PC-3 (cell line): ENCODE measurements at regions of chr5 and their contacts with region 1.

Region 1: GRCh38 chr5:24642022-24642421 is 2.8 kb downstream of the CDH10 start:
- DNase-seq: peak; percentile 75
- ATAC-seq: peak; percentile 62
- H3K4me3 ChIP-seq: no peak overlapping the region
- H3K27ac ChIP-seq: no peak overlapping the region
- H3K4me1 ChIP-seq: no peaks in the 10 kb centered on the region; the same call in 1 of the 2 replicates
- H3K27me3 ChIP-seq: no peaks in the 10 kb centered on the region
- CTCF ChIP-seq: peak; percentile 80

Region 2: DNA sequence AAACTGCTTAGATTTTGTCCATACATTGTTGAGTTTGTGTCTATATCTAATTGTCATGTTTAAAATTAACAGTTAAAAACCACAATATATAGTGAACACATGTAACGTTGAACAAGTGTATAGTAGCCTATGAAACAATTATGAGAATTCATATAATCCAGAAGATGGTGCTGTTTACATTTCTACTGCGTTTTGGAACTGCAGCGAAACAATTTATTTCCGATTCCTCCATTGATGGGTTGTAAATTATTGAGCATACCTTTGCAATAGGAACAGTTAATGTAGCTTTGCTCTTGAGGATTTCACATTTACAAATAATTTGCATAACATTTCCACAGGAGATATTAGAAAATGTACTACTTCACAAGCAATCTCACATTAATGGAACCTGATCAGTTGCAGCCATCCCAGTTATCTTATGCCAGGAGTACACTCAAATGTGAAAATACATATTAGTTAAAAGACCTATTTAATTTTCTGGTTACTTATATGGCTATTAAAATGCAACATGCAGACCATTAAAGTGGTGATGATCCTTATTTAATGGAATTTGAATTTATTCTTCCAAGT is 409.0 kb before region 1 on chr5:
- CTCF ChIA-PET with region 1: no interaction called
- POLR2A ChIA-PET with region 1: no interaction called
- intact Hi-C with region 1: loop called (anchors 1 kb)
- DNase-seq: peak; percentile 39
- ATAC-seq: no peak; the same call in 1 of the 2 replicates
- H3K4me3 ChIP-seq: no peak overlapping the region
- H3K27ac ChIP-seq: no peak overlapping the region
- H3K4me1 ChIP-seq: no peaks in the 10 kb centered on the region
- H3K27me3 ChIP-seq: no peaks in the 10 kb centered on the region
- CTCF ChIP-seq: peak; percentile 72

Region 3: GRCh38 chr5:24245821-24246220 is 396.2 kb before region 1 on chr5:
- CTCF ChIA-PET with region 1: no interaction called
- POLR2A ChIA-PET with region 1: no interaction called
- intact Hi-C with region 1: loop called (anchors 5 kb)
- DNase-seq: peak; percentile 53
- ATAC-seq: peak; percentile 87
- H3K4me3 ChIP-seq: no peak overlapping the region
- H3K27ac ChIP-seq: no peak overlapping the region
- H3K4me1 ChIP-seq: peaks cover 19% of the 10 kb centered on the region
- H3K27me3 ChIP-seq: no peaks in the 10 kb centered on the region
- CTCF ChIP-seq: no peak

Region 4: DNA sequence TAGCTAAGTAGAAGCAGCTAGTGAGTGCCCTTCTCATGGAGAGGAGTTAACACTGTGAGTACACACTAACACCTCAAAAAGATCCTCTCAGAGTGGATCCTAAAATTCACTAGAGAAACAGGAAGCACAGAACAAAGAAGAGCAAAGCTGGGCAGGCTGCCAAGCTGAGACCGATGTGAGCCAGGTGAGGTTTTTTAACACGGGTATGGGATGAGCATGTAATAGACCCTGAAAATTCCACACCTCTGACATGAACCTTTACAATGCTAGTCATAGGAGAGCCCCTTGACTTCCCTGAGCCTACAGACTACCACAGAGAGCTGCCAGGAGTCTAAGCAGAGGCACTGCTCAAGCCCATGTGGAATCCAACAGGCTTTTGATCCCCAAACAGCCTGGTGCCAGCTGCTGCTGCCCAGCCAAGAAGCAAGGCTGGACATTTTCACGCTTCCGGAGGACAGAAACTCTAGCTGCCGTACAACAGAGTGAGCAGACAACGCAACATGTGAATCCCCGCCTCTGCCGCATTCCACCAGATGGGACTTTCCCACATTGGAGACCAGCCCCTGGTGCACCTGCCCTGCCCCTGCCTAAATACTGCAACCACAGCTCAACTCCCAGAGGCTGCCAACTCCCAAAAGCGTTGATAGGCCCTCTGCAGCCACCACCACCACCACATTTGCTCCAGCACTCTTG is 278.1 kb before region 1 on chr5:
- CTCF ChIA-PET with region 1: no interaction called
- POLR2A ChIA-PET with region 1: no interaction called
- intact Hi-C with region 1: loop called (anchors 10 kb)
- DNase-seq: peak; percentile 30
- ATAC-seq: no peak
- H3K4me3 ChIP-seq: no peak overlapping the region
- H3K27ac ChIP-seq: no peak overlapping the region
- H3K4me1 ChIP-seq: no peaks in the 10 kb centered on the region
- H3K27me3 ChIP-seq: no peaks in the 10 kb centered on the region
- CTCF ChIP-seq: no peak

Region 5: GRCh38 chr5:24444414-24444813 is 197.6 kb before region 1 on chr5:
- CTCF ChIA-PET with region 1: no interaction called
- POLR2A ChIA-PET with region 1: no interaction called
- intact Hi-C with region 1: loop called (anchors 2 kb)
- DNase-seq: no peak
- ATAC-seq: no peak
- H3K4me3 ChIP-seq: no peak overlapping the region
- H3K27ac ChIP-seq: no peak overlapping the region
- H3K4me1 ChIP-seq: no peaks in the 10 kb centered on the region
- H3K27me3 ChIP-seq: no peaks in the 10 kb centered on the region
- CTCF ChIP-seq: no peak

Region 6: GRCh38 chr5:24535636-24536035 is 106.4 kb before region 1 on chr5:
- CTCF ChIA-PET with region 1: interaction called, 3 read pairs
- POLR2A ChIA-PET with region 1: no interaction called
- intact Hi-C with region 1: loop called (anchors 1 kb)
- DNase-seq: peak; percentile 36
- ATAC-seq: peak; percentile 62
- H3K4me3 ChIP-seq: no peak overlapping the region
- H3K27ac ChIP-seq: no peak overlapping the region
- H3K4me1 ChIP-seq: no peaks in the 10 kb centered on the region
- H3K27me3 ChIP-seq: no peaks in the 10 kb centered on the region
- CTCF ChIP-seq: peak; percentile 54

Region 7: GRCh38 chr5:24598956-24599355 is 43.1 kb before region 1 on chr5:
- CTCF ChIA-PET with region 1: no interaction called
- POLR2A ChIA-PET with region 1: no interaction called
- intact Hi-C with region 1: no loop called
- DNase-seq: no peak
- ATAC-seq: no peak
- H3K4me3 ChIP-seq: no peak overlapping the region
- H3K27ac ChIP-seq: no peak overlapping the region
- H3K4me1 ChIP-seq: no peaks in the 10 kb centered on the region
- H3K27me3 ChIP-seq: no peaks in the 10 kb centered on the region
- CTCF ChIP-seq: no peak

Region 8: DNA sequence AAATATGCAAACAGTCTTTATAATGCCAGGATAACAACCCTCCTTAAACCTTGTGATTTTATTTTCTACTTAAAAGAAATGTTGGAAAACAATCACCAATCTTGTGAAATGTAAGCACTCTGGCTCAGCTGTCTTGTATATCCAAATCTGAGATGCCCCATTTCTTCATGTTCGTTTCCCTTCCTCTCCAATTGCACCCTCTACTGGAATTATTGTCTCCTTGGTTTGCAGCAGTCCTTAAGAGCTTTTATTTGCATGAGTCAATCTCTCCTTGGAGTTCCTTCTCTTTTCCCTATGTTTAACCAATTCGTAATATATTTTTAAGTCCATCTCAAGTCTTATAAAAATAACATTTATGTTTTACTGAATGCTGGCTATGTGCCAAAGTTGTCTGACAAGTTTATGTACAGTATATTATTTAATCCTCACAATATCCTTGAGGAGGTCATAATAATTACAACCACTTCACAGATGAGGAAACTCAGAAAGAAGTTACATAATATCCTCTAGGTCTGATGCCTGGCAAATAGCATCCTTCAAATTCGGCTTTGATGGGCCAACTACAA is 364.8 kb after region 1 on chr5:
- CTCF ChIA-PET with region 1: interaction called, 3 read pairs
- POLR2A ChIA-PET with region 1: no interaction called
- intact Hi-C with region 1: loop called (anchors 1 kb)
- DNase-seq: peak; percentile 84
- ATAC-seq: peak; percentile 73
- H3K4me3 ChIP-seq: no peak overlapping the region
- H3K27ac ChIP-seq: no peak overlapping the region
- H3K4me1 ChIP-seq: peaks cover 13% of the 10 kb centered on the region
- H3K27me3 ChIP-seq: no peaks in the 10 kb centered on the region
- CTCF ChIP-seq: peak; percentile 77